HCT116 (cell line): ENCODE measurements at regions of chr3 and their contacts with region 1.

Region 1: GRCh38 chr3:48989796-48990635 is at the start of gene P4HTM:
- DNase-seq: peak; percentile 72
- ATAC-seq: peak; percentile 77
- H3K4me3 ChIP-seq: peak within 1 kb of the TSS; percentile 76 to 80
- H3K27ac ChIP-seq: peak within 1 kb of the TSS; percentile 98
- H3K4me1 ChIP-seq: peaks cover 23 to 27% of the 10 kb centered on the region in 2 experiments
- H3K27me3 ChIP-seq: no peaks in the 10 kb centered on the region
- CTCF ChIP-seq: peak; percentile 20 to 24 (median 24); a peak in 3 of 6 replicates
- POLR2A ChIP-seq: peak; percentile 85
- RAD21 ChIP-seq: 0 out of 2 replicates have a peak, but pooled peaks have one; percentile 30
- total RNA-seq, gene P4HTM: 60.5 TPM

Region 2: GRCh38 chr3:48885753-48886152 is 104.3 kb before region 1 on chr3:
- CTCF ChIA-PET with region 1: no interaction called
- POLR2A ChIA-PET with region 1: no interaction called
- RAD21 ChIA-PET with region 1: no interaction called
- intact Hi-C with region 1: no loop called
- DNase-seq: no peak
- ATAC-seq: no peak
- H3K4me3 ChIP-seq: no peak overlapping the region
- H3K27ac ChIP-seq: no peak overlapping the region
- H3K4me1 ChIP-seq: no peaks in the 10 kb centered on the region
- H3K27me3 ChIP-seq: no peaks in the 10 kb centered on the region
- CTCF ChIP-seq: no peak
- POLR2A ChIP-seq: no peak
- RAD21 ChIP-seq: no peak

Region 3: DNA sequence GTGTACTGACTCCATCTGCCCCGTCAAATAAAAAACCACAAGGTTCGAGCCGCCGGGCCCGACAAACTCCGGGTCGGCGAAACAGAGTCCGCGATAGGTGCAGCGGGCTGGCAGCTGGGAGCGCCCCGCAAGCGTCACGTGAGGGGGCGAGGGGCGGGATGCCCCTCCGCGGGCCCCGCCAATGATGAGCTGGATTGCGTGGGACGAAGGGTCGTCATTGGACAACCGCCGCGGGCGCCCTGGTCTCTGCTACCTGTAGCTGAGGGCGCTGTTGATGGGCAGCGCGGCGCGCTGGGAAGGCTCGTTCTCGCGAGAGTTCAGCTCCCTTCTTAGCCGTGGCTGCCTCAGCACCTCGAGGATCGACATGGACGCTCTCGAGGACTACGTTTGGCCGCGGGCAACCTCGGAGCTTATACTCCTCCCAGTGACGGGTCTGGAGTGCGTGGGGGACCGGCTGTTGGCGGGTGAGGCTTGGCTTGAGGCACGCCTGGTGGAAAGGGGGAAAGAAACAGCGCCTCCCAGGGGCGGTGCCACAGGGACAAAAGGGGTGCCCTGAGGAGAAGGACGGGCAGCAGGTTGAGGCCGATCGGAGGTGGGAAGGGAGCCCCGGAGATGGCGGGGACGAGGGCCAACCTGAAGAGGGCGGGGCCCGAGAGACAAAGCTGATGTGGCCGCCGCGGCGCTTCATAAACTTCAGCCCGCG is 17.2 kb after region 1 on chr3 and contains the start of gene WDR6:
- CTCF ChIA-PET with region 1: interaction called, 42 read pairs
- POLR2A ChIA-PET with region 1: interaction called, 26 read pairs
- RAD21 ChIA-PET with region 1: interaction called, 4 to 7 read pairs
- intact Hi-C with region 1: no loop called
- DNase-seq: peak; percentile 94
- ATAC-seq: peak; percentile 91
- H3K4me3 ChIP-seq: peak within 1 kb of the TSS; percentile 72 to 86
- H3K27ac ChIP-seq: peak within 1 kb of the TSS; percentile 99
- H3K4me1 ChIP-seq: peaks cover 3 to 26% of the 10 kb centered on the region in 2 experiments; a peak in 3 of 4 replicates
- H3K27me3 ChIP-seq: no peaks in the 10 kb centered on the region
- CTCF ChIP-seq: peak in 2 of 3 experiments; percentile 44 to 61; a peak in 3 of 6 replicates
- POLR2A ChIP-seq: peak; percentile 74
- RAD21 ChIP-seq: no peak
- total RNA-seq, gene WDR6: 174 TPM

Region 4: GRCh38 chr3:49013755-49014628 is 24.0 kb after region 1 on chr3:
- CTCF ChIA-PET with region 1: interaction called, 15 read pairs
- POLR2A ChIA-PET with region 1: interaction called, 6 read pairs
- RAD21 ChIA-PET with region 1: interaction called in 1 of 2 experiments, 3 read pairs
- intact Hi-C with region 1: no loop called
- DNase-seq: no peak
- ATAC-seq: peak; percentile 52
- H3K4me3 ChIP-seq: no peak overlapping the region
- H3K27ac ChIP-seq: no peak overlapping the region
- H3K4me1 ChIP-seq: peaks cover 5 to 27% of the 10 kb centered on the region in 2 experiments; a peak in 3 of 4 replicates
- H3K27me3 ChIP-seq: no peaks in the 10 kb centered on the region
- CTCF ChIP-seq: peak in 2 of 3 experiments; percentile 72 to 80; a peak in 4 of 6 replicates
- POLR2A ChIP-seq: no peak
- RAD21 ChIP-seq: no peak

Region 5: DNA sequence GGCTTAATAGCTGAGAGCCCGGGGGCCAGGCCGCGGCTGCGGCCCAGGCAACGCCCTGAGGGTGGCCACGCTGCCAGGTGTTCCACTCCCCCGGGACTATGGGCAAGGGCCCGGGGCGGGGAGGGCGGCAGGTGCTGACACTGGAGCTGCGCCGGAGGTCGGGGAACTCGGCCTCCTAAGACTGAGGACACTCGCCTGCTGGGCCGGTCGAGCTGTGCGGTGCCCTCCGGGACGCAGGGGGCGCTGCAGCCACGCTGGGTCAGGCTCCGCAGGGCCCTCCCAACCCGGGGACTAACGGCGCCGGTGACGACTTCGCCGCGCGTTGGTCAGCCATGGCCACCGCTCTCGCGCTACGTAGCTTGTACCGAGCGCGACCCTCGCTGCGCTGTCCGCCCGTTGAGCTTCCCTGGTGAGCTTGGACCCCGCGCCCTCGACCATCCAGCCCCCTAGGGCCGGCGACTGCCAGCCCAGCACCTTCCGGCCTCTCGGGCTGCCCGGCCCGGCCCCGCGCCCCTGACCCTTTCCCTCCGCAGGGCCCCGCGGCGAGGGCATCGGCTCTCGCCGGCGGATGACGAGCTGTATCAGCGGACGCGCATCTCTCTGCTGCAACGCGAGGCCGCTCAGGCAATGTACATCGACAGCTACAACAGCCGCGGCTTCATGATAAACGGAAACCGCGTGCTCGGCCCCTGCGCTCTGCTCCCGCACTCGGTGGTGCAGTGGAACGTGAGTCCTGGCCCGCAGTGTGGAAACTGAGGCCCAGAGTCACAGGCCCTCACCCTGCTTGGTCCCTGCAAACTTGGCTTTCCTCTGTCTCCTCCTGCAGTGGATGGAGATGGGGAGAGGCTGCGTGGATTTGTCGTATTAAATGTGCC is 32.0 kb after region 1 on chr3 and contains the start of gene NDUFAF3:
- CTCF ChIA-PET with region 1: interaction called, 28 read pairs
- POLR2A ChIA-PET with region 1: interaction called, 30 read pairs
- RAD21 ChIA-PET with region 1: no interaction called
- intact Hi-C with region 1: loop called (anchors 2 kb)
- DNase-seq: peak; percentile 90
- ATAC-seq: peak; percentile 66
- H3K4me3 ChIP-seq: peak within 1 kb of the TSS; percentile 80 to 98
- H3K27ac ChIP-seq: peak within 1 kb of the TSS; percentile 99
- H3K4me1 ChIP-seq: peaks cover 17 to 62% of the 10 kb centered on the region in 2 experiments
- H3K27me3 ChIP-seq: no peaks in the 10 kb centered on the region
- CTCF ChIP-seq: peak in 2 of 3 experiments; percentile 82 to 92; a peak in 4 of 6 replicates
- POLR2A ChIP-seq: peak; percentile 72
- RAD21 ChIP-seq: no peak
- total RNA-seq, gene NDUFAF3: 91.0 TPM

Region 6: DNA sequence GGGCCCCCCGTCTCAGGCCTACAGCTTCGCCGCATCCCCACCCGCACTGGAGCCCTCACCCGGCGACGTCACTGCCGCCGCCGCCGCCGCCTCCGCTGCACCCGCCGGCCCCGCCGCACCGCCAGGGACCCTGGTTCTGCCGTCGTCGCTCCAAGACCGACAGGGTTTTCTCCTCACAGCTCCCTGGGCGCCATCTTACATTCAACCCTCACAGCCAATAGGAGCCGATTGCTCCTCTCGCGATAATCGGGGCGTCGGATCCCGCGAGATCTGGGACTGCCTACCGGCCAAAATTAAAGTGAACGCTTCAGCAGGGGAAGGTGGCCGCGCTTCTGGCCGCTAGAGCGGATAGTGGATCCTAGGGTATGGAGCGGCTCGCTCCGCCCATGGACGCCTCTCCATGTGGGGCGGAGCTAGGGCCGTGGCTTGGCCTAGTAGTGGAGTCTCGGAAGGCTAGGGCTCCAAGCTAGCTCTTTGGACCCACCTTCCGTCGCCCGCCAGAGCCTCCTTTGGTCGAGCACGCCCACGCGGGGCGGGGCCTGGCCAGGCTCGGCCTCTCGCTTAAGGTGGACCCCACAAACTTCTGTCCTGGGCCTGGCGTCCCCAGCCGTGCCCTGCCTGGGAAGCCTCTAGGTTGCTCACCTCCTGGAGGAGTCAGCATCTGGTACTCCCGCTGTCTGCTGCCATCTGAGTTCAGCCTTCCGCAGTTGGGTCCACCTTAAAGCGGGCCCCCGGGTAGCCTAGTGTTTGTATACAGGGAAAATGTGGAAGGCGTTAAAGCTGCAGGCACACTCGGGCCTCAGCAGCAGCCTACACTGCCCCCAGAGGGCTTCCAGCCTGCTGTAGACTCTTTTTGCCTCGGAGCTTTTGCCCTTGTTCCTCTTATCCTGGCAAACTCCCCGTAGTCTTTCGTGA is 104.1 kb after region 1 on chr3 and contains the start of gene QRICH1:
- CTCF ChIA-PET with region 1: interaction called, 21 read pairs
- POLR2A ChIA-PET with region 1: no interaction called
- RAD21 ChIA-PET with region 1: interaction called in 1 of 2 experiments, 3 read pairs
- intact Hi-C with region 1: no loop called
- DNase-seq: peak; percentile 97
- ATAC-seq: peak; percentile 83
- H3K4me3 ChIP-seq: peak within 1 kb of the TSS; percentile 69 to 75
- H3K27ac ChIP-seq: peak within 1 kb of the TSS; percentile 90
- H3K4me1 ChIP-seq: peaks cover 6 to 23% of the 10 kb centered on the region in 2 experiments; a peak in 3 of 4 replicates
- H3K27me3 ChIP-seq: no peaks in the 10 kb centered on the region
- CTCF ChIP-seq: peak in 2 of 3 experiments; percentile 73; a peak in 4 of 6 replicates
- POLR2A ChIP-seq: peak; percentile 71
- RAD21 ChIP-seq: no peak
- total RNA-seq, gene QRICH1: 105 TPM

Region 7: DNA sequence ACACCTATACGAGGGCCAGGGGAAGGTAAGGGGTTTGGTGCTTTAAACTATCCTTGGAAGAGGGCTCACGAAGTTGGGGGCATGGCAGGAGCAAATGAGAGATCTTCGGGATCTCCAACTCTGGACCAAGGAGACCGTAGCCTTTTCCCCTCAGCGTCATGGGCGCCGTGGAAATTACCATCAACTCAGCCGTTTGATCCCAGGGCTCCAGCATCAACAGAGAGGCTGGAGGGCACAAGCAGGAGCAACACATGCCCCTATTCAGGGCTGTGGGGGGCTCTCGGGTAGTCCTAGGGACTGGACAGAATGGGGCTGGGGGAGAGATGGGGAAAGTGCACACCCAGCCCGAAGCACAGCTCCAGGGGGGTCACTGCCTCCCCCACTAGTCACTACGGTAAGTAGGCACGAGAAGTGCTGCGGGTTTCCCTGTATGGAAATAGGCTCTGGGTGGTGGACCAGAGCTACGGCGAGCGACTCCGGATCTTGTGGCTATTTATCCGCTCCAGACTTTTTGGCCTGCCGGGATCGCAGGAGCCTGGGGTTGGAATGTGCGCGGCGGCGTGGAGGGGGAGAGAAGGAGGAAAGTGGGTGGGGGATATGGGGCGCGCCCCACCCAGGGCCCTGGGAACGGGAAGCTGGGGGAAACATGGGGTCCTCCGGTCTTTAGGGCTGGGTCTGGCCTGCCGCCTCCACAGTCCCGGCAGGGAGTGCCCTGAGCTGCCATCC is 143.4 kb after region 1 on chr3:
- CTCF ChIA-PET with region 1: interaction called, 8 read pairs
- POLR2A ChIA-PET with region 1: no interaction called
- RAD21 ChIA-PET with region 1: no interaction called
- intact Hi-C with region 1: loop called (anchors 1 kb)
- DNase-seq: peak; percentile 74
- ATAC-seq: peak; percentile 76
- H3K4me3 ChIP-seq: peak overlapping the region; percentile 70 to 91
- H3K27ac ChIP-seq: peak overlapping the region; percentile 89
- H3K4me1 ChIP-seq: peaks cover 16 to 46% of the 10 kb centered on the region in 2 experiments
- H3K27me3 ChIP-seq: no peaks in the 10 kb centered on the region
- CTCF ChIP-seq: no peak
- POLR2A ChIP-seq: no peak
- RAD21 ChIP-seq: no peak

Region 8: DNA sequence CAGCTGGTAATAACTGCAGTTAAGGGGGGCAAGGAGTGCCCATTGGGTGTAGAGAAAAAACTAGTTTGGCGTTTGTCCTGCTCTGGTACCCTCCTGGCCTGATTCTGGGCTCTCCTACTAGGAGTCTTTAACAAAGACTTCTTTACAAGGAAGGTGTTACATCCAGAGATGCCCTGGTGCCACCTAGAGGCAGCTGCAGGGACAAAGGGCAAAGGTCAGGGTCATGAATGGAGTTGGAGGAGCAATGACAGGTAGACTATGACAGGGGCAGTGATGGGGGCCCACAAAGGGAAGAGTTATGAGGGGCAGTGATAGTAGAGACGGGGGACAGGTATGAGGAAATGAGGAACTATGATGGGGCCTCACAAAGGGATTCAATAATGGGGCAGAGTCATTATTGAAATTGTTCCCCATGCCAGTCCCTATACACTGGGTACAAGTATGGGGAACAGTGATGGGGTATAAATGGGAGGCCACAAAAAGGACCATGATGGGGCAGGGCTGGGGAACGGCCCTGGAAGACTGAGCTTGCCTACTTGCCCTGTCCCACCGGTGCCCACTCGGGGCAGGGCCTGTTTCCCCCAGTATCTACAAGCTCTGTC is 168.2 kb after region 1 on chr3:
- CTCF ChIA-PET with region 1: interaction called, 7 read pairs
- POLR2A ChIA-PET with region 1: no interaction called
- RAD21 ChIA-PET with region 1: interaction called, 3 read pairs
- intact Hi-C with region 1: loop called (anchors 2 kb)
- DNase-seq: peak; percentile 28
- ATAC-seq: peak; percentile 69
- H3K4me3 ChIP-seq: no peak overlapping the region
- H3K27ac ChIP-seq: no peak overlapping the region
- H3K4me1 ChIP-seq: no peaks in the 10 kb centered on the region
- H3K27me3 ChIP-seq: no peaks in the 10 kb centered on the region
- CTCF ChIP-seq: peak in 2 of 3 experiments; percentile 68 to 74; a peak in 5 of 6 replicates
- POLR2A ChIP-seq: no peak
- RAD21 ChIP-seq: peak; percentile 75